ENCODE measurements at regions of chr10 and their contacts with region 1.

Region 1: DNA sequence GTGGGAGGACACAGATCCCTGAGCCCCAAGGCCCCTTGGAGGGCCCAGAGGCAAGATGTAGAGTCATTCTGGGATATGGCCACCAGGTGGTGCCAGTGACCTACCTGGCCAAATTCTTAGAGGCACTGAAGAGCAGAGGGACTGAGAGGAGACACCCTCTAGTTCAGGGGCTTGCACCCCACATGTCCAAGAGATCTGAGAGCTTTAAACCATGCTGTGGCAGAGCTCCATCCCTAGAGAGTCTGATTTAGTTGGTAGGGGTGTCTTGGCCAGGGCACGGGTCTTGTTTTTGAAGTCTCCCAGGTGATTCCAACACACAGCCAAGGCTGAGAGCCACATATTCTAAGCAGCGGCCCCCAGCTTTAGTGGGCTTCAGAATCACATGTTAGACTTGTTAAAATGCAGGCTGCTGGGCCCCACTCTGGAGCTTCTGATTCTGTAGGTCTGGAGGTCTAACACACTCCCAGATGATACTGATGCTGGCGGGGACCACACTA is 52.5 kb downstream of the PRF1 start:
- DNase-seq: peak; percentile 83
- ATAC-seq: peak; percentile 77

Region 2: DNA sequence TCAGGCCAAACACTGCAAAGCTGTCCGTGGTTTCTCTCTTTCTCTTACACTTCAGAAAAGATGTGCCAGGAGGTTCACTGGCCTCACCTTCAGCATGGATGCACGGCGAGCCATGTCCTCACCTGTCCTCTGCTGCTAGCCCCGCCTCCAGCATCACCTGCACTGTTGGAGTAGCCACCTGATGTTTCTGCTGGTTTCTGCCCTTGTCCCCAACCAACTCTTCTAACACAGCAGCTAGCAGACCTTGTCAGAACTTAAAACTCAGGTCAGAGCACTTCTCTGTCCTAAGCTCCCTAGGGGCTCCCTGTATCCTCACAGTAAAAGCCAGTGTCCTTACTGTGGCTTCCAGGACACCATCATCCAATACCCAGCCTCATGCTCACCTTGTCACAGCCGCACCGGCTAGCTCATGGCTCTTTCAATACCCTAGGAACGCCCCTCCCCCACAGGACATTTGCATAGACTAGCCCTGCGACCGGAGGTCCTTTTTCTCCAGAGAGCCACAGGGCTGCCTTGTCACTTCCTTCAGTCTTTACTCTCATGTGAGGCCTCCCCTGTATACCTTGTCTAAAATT is 56.3 kb before region 1 on chr10:
- intact Hi-C with region 1: no loop called
- DNase-seq: no peak
- ATAC-seq: no peak

Region 3: DNA sequence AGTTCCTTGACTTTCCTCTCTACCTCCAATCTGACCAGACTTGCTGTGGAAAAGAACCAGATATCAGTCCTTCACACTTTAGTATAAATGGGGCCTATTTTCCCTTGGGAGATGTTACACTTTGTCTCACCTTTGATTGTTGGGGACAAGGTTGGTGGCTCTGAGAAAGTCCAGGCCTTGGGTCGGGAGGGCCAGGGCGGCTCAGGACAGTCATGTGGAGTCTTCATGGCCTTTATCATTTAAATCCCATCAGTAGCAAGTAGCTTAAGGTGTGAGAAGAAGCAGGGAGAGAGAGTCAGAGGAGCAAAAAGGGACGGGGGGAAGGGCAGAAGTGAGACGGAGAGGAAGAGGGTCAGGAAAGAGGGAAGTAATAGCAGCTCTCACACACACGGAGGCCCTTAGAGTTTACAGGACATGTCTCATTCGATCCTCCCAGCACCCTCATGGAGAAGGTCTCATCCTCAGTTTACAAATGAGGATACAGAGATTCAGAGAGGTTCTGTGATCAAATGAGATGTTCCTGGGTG is 194.7 kb after region 1 on chr10:
- intact Hi-C with region 1: no loop called
- DNase-seq: peak; percentile 21
- ATAC-seq: no peak

Region 4: GRCh38 chr10:70758757-70759514 is 208.9 kb after region 1 on chr10:
- intact Hi-C with region 1: loop called (anchors 2 kb)
- DNase-seq: peak; percentile 86
- ATAC-seq: peak; percentile 51

Measured in sciatic nerve (tissue), 2 donors.